ENCODE measurements at regions of chr6 and their contacts with region 1.

Region 1: DNA sequence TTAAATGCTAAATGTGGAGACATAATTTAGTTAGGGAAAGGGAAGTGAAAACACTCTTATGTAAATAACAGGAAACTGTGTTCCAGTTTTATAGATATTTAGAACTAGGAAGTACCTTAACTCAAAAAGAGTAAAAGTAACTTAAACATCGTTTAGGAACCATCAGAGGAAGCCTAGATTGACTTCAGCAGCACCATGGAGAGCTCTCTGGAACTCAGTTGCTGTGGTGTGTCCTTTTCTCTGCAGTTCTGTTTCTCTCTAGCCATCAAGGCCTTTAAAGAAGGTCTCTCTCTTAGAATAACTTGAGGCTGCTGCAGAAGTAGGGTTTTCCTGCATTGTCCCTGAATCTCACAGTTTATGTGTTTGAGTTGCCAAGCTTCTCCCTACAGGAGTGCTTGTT is 26.9 kb downstream of the CLVS2 start:
- DNase-seq: no peak
- H3K4me3 ChIP-seq: no peak overlapping the region
- H3K27ac ChIP-seq: no peak overlapping the region
- H3K4me1 ChIP-seq: no peaks in the 10 kb centered on the region
- H3K27me3 ChIP-seq: no peaks in the 10 kb centered on the region
- CTCF ChIP-seq: no peak

Region 2: GRCh38 chr6:122956376-122956775 is 66.6 kb before region 1 on chr6:
- CTCF ChIA-PET with region 1: no interaction called
- POLR2A ChIA-PET with region 1: interaction called, 11 read pairs
- intact Hi-C with region 1: no loop called
- DNase-seq: no peak
- H3K4me3 ChIP-seq: no peak overlapping the region
- H3K27ac ChIP-seq: no peak overlapping the region
- H3K4me1 ChIP-seq: no peaks in the 10 kb centered on the region
- H3K27me3 ChIP-seq: no peaks in the 10 kb centered on the region
- CTCF ChIP-seq: no peak

Region 3: DNA sequence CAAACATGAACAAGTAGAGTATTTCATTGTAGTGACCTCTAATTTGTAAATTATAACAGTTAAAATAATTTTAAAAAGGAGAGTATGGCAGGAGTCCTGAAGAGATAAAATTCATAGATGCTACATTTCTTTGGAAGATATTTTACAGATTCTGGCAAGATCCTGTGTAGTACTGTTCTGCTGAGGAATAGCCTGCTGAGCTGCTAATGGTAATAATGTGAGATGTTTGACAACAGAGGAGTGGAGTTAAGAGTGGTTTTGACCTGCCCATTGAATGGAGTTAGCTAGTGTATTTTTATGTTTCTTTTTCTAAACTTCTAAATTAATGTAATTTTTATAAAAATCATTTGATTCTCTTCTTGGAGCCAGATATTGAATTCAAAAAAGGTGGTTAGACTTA is 15.1 kb before region 1 on chr6:
- CTCF ChIA-PET with region 1: no interaction called
- POLR2A ChIA-PET with region 1: no interaction called
- intact Hi-C with region 1: no loop called
- DNase-seq: peak; percentile 51
- H3K4me3 ChIP-seq: no peak overlapping the region
- H3K27ac ChIP-seq: no peak overlapping the region
- H3K4me1 ChIP-seq: peaks cover 44% of the 10 kb centered on the region
- H3K27me3 ChIP-seq: no peaks in the 10 kb centered on the region
- CTCF ChIP-seq: no peak

Measured in A673 (cell line).